CD14-positive monocyte (primary cell): ENCODE measurements at regions of chr19 and their contacts with region 1.

Region 1: DNA sequence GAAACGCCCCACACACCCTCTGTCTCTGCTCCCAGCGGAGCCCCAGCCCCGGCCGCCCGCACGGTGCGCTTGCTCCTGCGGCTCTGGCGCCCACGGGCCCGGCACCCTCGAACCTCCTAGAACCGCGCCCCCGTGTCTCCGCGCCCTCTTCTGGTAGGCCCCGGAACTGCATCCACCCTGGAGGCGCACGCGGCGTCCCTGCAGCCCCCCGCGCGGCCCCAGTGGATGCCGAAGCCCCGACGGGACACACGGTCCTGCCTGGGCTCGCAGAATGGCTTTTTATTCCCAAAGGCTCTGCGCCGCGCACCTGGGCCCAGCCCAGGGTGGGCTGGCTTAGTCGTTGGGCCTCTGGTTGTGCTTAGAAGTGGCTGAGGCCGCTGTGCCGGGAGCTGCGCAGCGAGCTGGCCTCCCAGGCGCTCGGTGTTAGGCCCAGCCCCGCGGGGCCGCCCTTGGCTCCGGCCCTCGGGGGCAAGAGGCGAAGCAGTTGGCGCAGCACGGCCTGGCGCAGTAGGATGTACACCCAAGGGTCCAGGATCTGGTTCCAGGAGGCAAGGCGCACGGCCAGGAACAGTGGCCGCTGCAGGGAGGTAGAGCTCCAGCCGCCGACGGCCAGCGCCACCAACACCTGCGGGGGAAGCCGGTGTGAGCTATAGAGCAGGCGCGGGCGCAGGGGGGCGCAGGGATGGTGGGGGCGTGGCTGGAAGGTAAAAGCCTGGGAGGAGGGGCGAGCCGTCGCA is 2.8 kb downstream of the PTGER1 start:
- DNase-seq: peak; percentile 45 to 61 (median 51)
- H3K4me3 ChIP-seq: no peak overlapping the region
- H3K4me3 Mint-ChIP-seq: peak overlapping the region in 1 of 2 donors; percentile 74
- H3K27ac ChIP-seq: no peak overlapping the region
- H3K27ac Mint-ChIP-seq: no peak overlapping the region
- H3K4me1 ChIP-seq: peaks cover 38 to 56% of the 10 kb centered on the region in 2 donors
- H3K4me1 Mint-ChIP-seq: peaks cover 35% of the 10 kb centered on the region
- H3K27me3 ChIP-seq: peaks cover 18 to 38% of the 10 kb centered on the region in 2 donors
- H3K27me3 Mint-ChIP-seq: peaks cover 31 to 55% (median 34%) of the 10 kb centered on the region in 3 donors
- CTCF ChIP-seq: peak; percentile 100

Region 2: GRCh38 chr19:14198384-14199376 is 273.7 kb before region 1 on chr19:
- intact Hi-C with region 1: loop called in 1 of 2 experiments (anchors 10 kb)
- DNase-seq: no peak
- H3K4me3 ChIP-seq: no peak overlapping the region
- H3K4me3 Mint-ChIP-seq: no peak overlapping the region
- H3K27ac ChIP-seq: no peak overlapping the region
- H3K27ac Mint-ChIP-seq: no peak overlapping the region
- H3K4me1 ChIP-seq: no peaks in the 10 kb centered on the region
- H3K4me1 Mint-ChIP-seq: peaks cover 5% of the 10 kb centered on the region
- H3K27me3 ChIP-seq: peaks cover 3 to 7% of the 10 kb centered on the region in 2 donors
- H3K27me3 Mint-ChIP-seq: peaks cover 8 to 28% (median 23%) of the 10 kb centered on the region in 3 donors
- CTCF ChIP-seq: no peak

Region 3: GRCh38 chr19:14432791-14433553 is 39.4 kb before region 1 on chr19 and contains the start of gene PKN1:
- intact Hi-C with region 1: loop called (anchors 2 to 5 kb)
- DNase-seq: no peak
- H3K4me3 ChIP-seq: peak within 1 kb of the TSS; percentile 57 to 93 (median 89)
- H3K4me3 Mint-ChIP-seq: peak within 1 kb of the TSS; percentile 79 to 87
- H3K27ac ChIP-seq: peak within 1 kb of the TSS in 1 of 2 donors; percentile 62
- H3K27ac Mint-ChIP-seq: peak within 1 kb of the TSS; percentile 42 to 86 (median 79)
- H3K4me1 ChIP-seq: peaks cover 40 to 48% of the 10 kb centered on the region in 2 donors
- H3K4me1 Mint-ChIP-seq: peaks cover 38% of the 10 kb centered on the region
- H3K27me3 ChIP-seq: peaks cover 0 to 2% of the 10 kb centered on the region in 2 donors
- H3K27me3 Mint-ChIP-seq: peaks cover 8 to 16% (median 9%) of the 10 kb centered on the region in 3 donors
- CTCF ChIP-seq: no peak
- polyA plus RNA-seq, gene PKN1: 49.5 to 119 (median 49.6) TPM

Region 4: DNA sequence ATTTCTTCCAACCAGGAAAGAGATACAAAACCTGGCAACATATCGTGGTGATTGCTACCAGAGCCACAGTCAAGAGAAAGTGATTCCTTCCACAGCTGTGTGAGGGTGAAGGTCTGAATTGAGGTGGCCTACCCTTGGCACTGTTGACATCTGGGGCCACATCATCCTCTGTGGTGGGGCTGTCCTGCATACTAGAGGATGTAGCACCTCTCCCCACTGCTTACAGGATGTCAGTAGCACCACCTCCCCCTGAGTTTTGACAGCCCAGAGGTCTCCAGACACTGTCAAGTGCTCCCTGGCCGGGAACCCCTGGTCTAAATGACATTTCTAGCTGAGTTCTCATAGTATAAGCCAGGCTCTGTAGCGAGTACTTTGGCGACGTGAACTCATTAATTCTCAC is 12.7 kb before region 1 on chr19:
- intact Hi-C with region 1: loop called in 1 of 2 experiments (anchors 1 kb)
- DNase-seq: peak in 1 of 3 donors; percentile 5
- H3K4me3 ChIP-seq: no peak overlapping the region
- H3K4me3 Mint-ChIP-seq: no peak overlapping the region
- H3K27ac ChIP-seq: peak overlapping the region; percentile 9 to 43
- H3K27ac Mint-ChIP-seq: peak overlapping the region in 4 of 7 donors; percentile 13 to 70 (median 46)
- H3K4me1 ChIP-seq: peaks cover 20 to 28% of the 10 kb centered on the region in 2 donors
- H3K4me1 Mint-ChIP-seq: peaks cover 27% of the 10 kb centered on the region
- H3K27me3 ChIP-seq: no peaks in the 10 kb centered on the region
- H3K27me3 Mint-ChIP-seq: no peaks in the 10 kb centered on the region
- CTCF ChIP-seq: no peak